Natural killer cell (primary cell): ENCODE measurements at regions of chr2 and their contacts with region 1.

Region 1: GRCh38 chr2:437762-438393 is 150.0 kb upstream of the ALKAL2 start:
- DNase-seq: peak; percentile 65 to 89
- ATAC-seq: peak; percentile 93 to 95 (median 94)
- H3K4me3 ChIP-seq: peak overlapping the region; percentile 9
- H3K4me3 Mint-ChIP-seq: peak overlapping the region; percentile 75
- H3K27ac ChIP-seq: peak overlapping the region; percentile 80
- H3K27ac Mint-ChIP-seq: peak overlapping the region; percentile 65 to 76
- H3K4me1 ChIP-seq: peaks cover 57% of the 10 kb centered on the region
- H3K4me1 Mint-ChIP-seq: peaks cover 37 to 57% of the 10 kb centered on the region in 2 donors
- H3K27me3 ChIP-seq: no peaks in the 10 kb centered on the region
- H3K27me3 Mint-ChIP-seq: no peaks in the 10 kb centered on the region
- CTCF ChIP-seq: no peak

Region 2: GRCh38 chr2:108920-109809 is 328.7 kb before region 1 on chr2:
- intact Hi-C with region 1: no loop called
- DNase-seq: no peak
- ATAC-seq: no peak
- H3K4me3 ChIP-seq: no peak overlapping the region
- H3K4me3 Mint-ChIP-seq: no peak overlapping the region
- H3K27ac ChIP-seq: no peak overlapping the region
- H3K27ac Mint-ChIP-seq: no peak overlapping the region
- H3K4me1 ChIP-seq: no peaks in the 10 kb centered on the region
- H3K4me1 Mint-ChIP-seq: no peaks in the 10 kb centered on the region
- H3K27me3 ChIP-seq: peaks cover 12% of the 10 kb centered on the region
- H3K27me3 Mint-ChIP-seq: peaks cover 0 to 12% of the 10 kb centered on the region in 2 donors
- CTCF ChIP-seq: no peak

Region 3: DNA sequence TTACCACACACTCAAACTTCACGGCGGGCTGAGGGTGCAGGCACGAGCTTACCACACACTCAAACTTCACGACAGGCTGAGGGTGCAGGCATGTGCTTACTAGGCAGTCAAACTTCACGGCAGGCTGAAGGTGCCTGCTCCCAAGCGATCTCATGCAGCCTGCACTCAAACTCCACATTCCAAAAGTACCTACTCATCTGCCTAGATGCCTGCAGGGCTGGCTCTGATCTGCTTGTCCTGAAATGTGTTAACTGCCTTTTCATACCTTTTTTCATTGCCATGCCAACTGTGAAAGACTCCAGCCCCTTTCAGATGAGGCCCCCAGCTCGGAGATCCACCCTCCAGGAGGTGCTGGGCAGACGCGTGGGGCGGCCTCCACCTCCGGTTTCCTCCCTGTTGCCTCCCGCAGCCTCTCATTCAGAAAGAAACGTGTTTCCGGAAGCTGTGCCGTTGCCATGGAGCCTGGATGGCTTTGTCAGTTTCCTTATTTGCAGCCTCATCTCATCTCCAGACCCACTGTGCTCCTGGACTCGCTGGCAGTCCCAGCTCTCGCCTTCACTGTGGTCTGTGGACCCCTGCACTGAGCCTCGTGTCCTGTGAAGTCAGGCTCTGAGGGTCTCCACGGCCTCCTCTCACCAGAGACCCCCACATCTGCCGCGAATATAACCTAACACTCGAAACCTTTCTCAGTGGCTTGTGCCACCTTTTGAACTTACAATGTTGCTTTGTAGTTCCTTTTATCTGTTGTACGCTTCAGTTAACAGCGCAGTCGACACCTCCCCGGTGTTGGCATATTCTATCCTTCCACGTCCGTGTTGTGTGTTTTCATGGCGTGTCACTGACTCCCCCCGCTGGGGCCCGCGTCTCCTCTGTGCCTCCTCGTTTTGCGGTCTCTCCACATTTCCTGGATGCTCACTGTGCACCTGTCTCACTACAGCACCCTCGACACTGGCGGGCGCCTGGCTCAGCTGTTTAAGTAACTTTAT is 43.9 kb before region 1 on chr2:
- intact Hi-C with region 1: loop called (anchors 1 kb)
- DNase-seq: peak; percentile 35 to 82
- ATAC-seq: peak; percentile 55 to 85 (median 82)
- H3K4me3 ChIP-seq: peak overlapping the region; percentile 12
- H3K4me3 Mint-ChIP-seq: peak overlapping the region; percentile 79
- H3K27ac ChIP-seq: peak overlapping the region; percentile 32
- H3K27ac Mint-ChIP-seq: peak overlapping the region; percentile 39 to 73
- H3K4me1 ChIP-seq: peaks cover 23% of the 10 kb centered on the region
- H3K4me1 Mint-ChIP-seq: peaks cover 20 to 25% of the 10 kb centered on the region in 2 donors
- H3K27me3 ChIP-seq: no peaks in the 10 kb centered on the region
- H3K27me3 Mint-ChIP-seq: no peaks in the 10 kb centered on the region
- CTCF ChIP-seq: no peak

Region 4: DNA sequence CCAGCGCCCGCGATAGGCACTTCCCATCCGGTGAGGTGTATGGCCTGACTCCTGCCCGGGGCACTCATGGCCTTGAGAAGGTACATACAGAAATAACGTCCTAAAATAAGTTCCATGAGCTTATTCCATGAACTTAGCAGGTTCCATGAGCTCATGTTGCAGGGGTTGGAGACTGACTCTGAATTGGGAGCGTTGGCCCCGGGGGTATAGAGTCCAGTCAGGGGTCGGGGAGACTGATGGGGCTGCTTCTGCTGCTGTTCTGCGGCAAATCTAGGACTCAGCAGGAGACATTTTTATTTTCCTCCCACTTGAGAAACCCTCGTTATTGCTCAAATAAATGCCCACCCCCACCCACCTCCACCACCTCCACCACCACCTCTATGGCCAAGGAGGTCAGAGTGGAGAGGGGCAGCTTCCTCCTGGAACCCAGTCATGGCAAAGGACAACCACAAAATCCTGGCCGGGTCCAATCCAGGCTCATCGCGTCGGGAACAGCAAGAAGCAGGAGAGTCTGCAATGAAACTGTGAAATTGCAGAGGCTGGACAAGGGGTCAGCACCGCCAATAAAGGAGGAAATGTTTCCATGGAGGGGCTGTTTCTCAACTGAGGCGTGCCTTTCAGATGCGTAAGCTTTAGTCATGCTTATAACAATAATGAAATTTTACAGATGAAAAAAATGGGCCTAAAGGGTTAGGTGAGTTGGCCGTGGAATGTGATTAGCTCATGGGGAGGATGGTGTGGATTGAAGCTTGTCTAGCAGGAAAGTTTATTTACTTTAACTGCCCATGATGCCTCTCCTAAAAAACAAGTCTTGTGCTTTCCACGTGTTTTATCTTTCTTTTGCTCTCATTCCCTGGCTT is 13.3 kb before region 1 on chr2:
- intact Hi-C with region 1: no loop called
- DNase-seq: no peak
- ATAC-seq: no peak
- H3K4me3 ChIP-seq: no peak overlapping the region
- H3K4me3 Mint-ChIP-seq: no peak overlapping the region
- H3K27ac ChIP-seq: no peak overlapping the region
- H3K27ac Mint-ChIP-seq: no peak overlapping the region
- H3K4me1 ChIP-seq: peaks cover 28% of the 10 kb centered on the region
- H3K4me1 Mint-ChIP-seq: peaks cover 23% of the 10 kb centered on the region in 2 donors
- H3K27me3 ChIP-seq: no peaks in the 10 kb centered on the region
- H3K27me3 Mint-ChIP-seq: no peaks in the 10 kb centered on the region
- CTCF ChIP-seq: no peak

Region 5: GRCh38 chr2:455015-455705 is 17.3 kb after region 1 on chr2:
- intact Hi-C with region 1: loop called (anchors 2 kb)
- DNase-seq: peak; percentile 39 to 43
- ATAC-seq: peak; percentile 82 to 90 (median 85)
- H3K4me3 ChIP-seq: no peak overlapping the region
- H3K4me3 Mint-ChIP-seq: peak overlapping the region; percentile 64
- H3K27ac ChIP-seq: peak overlapping the region; percentile 14
- H3K27ac Mint-ChIP-seq: peak overlapping the region; percentile 71 to 84
- H3K4me1 ChIP-seq: peaks cover 46% of the 10 kb centered on the region
- H3K4me1 Mint-ChIP-seq: peaks cover 56 to 63% of the 10 kb centered on the region in 2 donors
- H3K27me3 ChIP-seq: no peaks in the 10 kb centered on the region
- H3K27me3 Mint-ChIP-seq: peaks cover 2 to 3% of the 10 kb centered on the region in 2 donors
- CTCF ChIP-seq: no peak

Region 6: DNA sequence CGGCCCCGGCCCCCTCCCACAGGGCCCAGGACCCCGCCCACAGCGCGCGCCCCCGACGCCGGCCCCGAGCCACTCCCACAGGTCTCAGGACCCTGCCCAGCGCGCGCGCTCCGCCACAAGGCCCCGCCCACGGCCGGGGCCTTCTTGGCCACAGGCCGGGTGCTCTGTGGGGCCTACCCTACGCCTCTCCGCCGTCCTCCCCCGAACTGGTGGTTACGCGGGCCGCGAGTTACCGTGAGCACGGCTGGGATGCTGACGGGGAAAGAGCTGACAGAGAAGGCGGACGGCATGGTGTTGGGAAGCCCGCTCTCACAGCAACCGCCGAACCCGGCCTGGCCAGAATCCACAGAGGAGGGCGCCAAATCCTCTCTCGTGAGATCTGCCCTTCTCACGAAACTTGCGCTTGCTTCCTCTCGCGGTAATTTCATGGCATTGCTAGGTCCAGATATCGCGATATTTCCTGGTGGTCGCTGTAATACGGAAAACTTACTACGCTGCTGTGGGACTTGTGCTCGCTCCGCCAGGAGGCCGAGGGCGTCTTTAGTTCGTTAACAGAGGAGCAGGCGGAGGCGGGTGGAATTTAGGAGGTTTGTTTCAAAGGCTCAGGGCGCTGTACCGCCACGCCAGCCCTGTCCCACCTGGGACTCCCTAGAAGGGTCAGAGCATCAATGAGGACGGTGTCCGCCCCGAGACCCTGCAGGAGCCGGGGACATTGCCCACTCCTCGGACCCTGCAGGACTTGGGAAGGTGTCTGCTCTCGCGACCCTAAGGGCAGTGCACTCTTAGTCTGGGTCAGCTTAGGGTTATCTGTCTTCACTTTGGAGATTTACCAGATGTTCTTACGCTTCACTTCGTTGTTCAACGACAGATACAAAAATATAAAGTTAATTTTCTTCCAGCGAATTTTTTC is 239.4 kb after region 1 on chr2 and contains the start of gene TMEM18:
- intact Hi-C with region 1: loop called (anchors 5 kb)
- DNase-seq: peak; percentile 98 to 99
- ATAC-seq: peak; percentile 78 to 92 (median 79)
- H3K4me3 ChIP-seq: peak within 1 kb of the TSS; percentile 90
- H3K4me3 Mint-ChIP-seq: peak within 1 kb of the TSS; percentile 98
- H3K27ac ChIP-seq: peak within 1 kb of the TSS; percentile 98
- H3K27ac Mint-ChIP-seq: peak within 1 kb of the TSS; percentile 98
- H3K4me1 ChIP-seq: peaks cover 16% of the 10 kb centered on the region
- H3K4me1 Mint-ChIP-seq: peaks cover 44 to 50% of the 10 kb centered on the region in 2 donors
- H3K27me3 ChIP-seq: no peaks in the 10 kb centered on the region
- H3K27me3 Mint-ChIP-seq: no peaks in the 10 kb centered on the region
- CTCF ChIP-seq: peak; percentile 48
- total RNA-seq, gene TMEM18: 22.0 to 30.8 (median 22.1) TPM